Activated T-helper 1 cell treated with anti-CD3 and anti-CD28 coated beads, Interleukin-12 subunit alpha, Interleukin-12 subunit beta, Interleukin-2, Interleukin-4 antibody, amounts not matched to agents 30 ng/mL and 10 ng/mL and 1 ng/mL, durations not matched to agents 14 hours and 24 hours and 36 hours (primary cell): ENCODE measurements at regions of chr11 and their contacts with region 1.

Region 1: DNA sequence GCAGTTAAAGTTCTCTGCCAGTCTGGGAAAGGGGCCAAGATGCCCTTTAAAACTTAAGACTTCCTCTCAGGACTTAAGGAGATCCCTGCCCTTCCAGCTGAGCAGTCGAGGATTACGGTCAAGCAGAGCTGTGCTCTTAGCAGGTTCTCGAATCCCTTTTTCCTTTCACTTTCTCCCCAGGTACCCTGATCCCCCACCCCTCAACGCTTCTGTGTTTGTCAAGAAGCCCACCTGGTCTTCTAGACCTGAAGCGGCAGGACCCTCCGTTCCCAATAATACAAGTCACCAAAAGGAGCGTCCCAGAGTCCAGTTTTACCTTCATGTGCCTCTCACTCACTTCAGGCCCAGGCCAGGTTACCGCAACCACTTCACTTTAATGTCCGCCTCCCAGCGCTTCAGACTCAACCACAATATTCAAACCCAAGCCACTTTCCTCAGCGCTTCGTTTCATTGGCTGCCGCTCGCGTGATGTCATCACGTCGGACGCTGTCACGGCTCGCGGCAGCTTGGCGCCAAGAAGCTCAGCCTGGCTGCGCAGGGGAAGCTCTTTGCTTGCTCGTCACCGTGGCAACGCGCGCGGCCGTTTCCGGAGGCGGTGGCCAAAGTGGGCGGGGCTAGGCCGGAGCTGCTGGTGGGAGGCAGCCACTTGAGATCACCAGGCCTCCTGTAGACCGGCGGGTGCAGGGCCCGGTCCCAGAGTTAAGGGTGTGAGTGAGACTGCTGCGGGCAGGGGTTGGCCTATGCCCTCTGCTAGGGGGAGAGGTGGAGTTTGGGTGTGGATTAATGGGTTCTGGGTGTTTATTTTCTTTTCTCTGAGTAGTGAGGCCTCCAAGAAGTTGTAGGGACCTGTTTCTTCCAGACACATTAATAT is at the starts of genes KIF18A and METTL15:
- DNase-seq: peak; percentile 99
- H3K4me3 Mint-ChIP-seq: peak within 1 kb of the TSS; percentile 97
- H3K27ac Mint-ChIP-seq: peak within 1 kb of the TSS; percentile 99
- H3K4me1 Mint-ChIP-seq: peaks cover 65% of the 10 kb centered on the region
- H3K27me3 Mint-ChIP-seq: no peaks in the 10 kb centered on the region
- total RNA-seq, gene KIF18A: 13.1 and 15.4 TPM in 2 replicates
- total RNA-seq, gene METTL15: 17.1 and 18.0 TPM in 2 replicates

Region 2: DNA sequence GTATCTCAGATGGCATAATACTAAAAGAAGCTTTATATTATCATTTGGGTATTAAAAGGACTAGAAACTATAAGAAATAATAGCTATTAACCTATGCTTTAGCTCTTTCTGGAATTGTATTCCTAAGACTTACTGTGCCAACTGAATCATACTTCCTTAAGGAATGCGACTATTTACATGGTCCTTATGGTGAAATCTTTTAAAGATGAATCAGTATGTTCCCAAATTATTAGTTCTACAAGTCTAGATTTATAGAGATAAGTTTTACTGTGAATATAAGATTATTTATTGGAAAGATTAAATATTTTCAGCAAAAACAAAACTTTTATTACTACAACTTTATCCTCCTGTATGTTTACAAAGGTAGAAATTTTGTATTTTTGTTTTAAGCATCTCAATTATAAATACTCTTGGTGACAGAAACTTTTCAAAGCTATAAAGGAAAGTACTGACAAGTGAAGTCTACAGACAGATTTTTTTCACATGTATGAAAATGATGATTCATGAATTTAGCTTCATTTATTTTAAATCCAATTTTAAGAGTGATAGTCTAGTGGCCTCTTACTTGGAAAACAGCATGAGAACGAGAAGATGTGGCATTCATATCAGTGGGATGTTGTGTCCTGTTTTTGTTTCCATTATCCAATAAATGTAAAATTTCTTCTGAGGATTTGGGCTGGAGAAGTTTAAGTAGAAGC is 17.8 kb before region 1 on chr11:
- intact Hi-C with region 1: loop called (anchors 2 kb)
- DNase-seq: no peak
- H3K4me3 Mint-ChIP-seq: no peak overlapping the region
- H3K27ac Mint-ChIP-seq: no peak overlapping the region
- H3K4me1 Mint-ChIP-seq: no peaks in the 10 kb centered on the region
- H3K27me3 Mint-ChIP-seq: no peaks in the 10 kb centered on the region

Region 3: DNA sequence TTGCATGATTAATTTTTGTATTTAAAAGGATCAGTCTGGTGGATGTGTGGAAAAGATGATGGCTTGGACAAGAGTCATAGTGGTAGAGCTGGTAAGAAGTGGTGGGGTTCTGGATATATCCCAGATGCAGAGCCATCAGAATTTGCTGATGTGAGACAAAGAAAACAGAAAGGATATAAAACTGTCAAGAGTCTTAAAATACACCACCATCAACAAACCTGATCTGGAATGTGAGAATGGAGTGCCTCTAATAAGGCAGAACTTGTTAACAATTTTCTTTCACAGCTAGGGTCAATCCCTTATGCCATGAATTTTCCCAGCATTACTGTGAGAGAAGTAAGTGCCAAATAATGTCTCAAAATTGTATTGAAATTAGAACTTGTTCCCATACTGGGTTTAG is 215.6 kb after region 1 on chr11:
- intact Hi-C with region 1: loop called (anchors 10 kb)
- DNase-seq: no peak
- H3K4me3 Mint-ChIP-seq: no peak overlapping the region
- H3K27ac Mint-ChIP-seq: no peak overlapping the region
- H3K4me1 Mint-ChIP-seq: no peaks in the 10 kb centered on the region
- H3K27me3 Mint-ChIP-seq: no peaks in the 10 kb centered on the region